Right cardiac atrium (tissue), 5 donors: ENCODE measurements at regions of chr13 and their contacts with region 1.

Region 1: DNA sequence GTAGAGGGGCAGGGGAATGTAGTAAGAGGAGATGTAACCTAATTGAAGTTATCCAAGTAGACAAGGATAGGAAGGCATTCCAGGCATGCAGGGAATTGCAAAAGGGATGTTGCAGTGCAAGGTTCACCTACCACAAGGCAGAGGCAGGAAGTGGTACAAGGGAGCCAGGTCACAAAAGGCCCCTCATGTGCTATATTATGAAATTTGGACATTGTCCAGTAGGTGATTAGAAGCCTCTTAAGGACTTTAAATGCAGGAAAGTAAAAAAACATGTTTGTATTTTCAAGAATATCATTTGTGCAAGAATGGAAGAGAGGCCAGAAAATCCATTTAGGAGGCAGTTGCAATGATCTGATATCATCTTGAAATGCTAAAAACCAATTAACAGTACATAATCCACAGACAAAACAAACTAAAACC is 111.4 kb downstream of the FRY start:
- DNase-seq: no peak
- ATAC-seq: peak in 1 of 2 donors; percentile 61
- H3K4me3 ChIP-seq: no peak overlapping the region
- H3K27ac ChIP-seq: no peak overlapping the region
- H3K4me1 ChIP-seq: peaks cover 2% of the 10 kb centered on the region
- H3K27me3 ChIP-seq: no peaks in the 10 kb centered on the region

Region 2: GRCh38 chr13:32031025-32031814 is 111.7 kb before region 1 on chr13 and contains the start of gene FRY:
- intact Hi-C with region 1: loop called in 1 of 4 experiments (anchors 10 kb)
- DNase-seq: peak; percentile 67 to 87 (median 81)
- ATAC-seq: peak; percentile 91 to 94
- H3K4me3 ChIP-seq: peak within 1 kb of the TSS; percentile 80
- H3K27ac ChIP-seq: peak within 1 kb of the TSS; percentile 57
- H3K4me1 ChIP-seq: no peaks in the 10 kb centered on the region
- H3K27me3 ChIP-seq: no peaks in the 10 kb centered on the region
- total RNA-seq, gene FRY: 101 to 139 (median 116) TPM

Region 3: DNA sequence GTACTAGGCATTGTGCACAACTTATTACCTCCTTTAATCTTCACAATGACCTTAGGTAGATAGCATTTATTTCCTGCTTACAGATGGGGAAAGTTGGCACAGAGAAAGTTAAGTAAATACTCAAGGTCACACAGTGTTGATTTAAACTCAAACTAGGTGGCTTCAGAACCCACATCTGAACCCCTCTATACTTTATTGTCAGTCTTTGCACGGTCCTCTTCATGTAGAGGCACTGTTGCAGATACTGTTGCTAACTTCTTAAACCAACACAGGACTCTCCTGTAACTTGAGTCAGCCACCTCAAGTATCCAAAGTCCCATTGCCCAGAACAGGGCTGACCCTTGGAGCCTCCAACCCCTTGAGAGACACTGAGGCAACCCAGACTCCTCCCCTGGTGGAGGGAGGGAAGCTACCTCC is 62.6 kb before region 1 on chr13:
- intact Hi-C with region 1: no loop called
- DNase-seq: no peak
- ATAC-seq: peak in 1 of 2 donors; percentile 14
- H3K4me3 ChIP-seq: no peak overlapping the region
- H3K27ac ChIP-seq: no peak overlapping the region
- H3K4me1 ChIP-seq: no peaks in the 10 kb centered on the region
- H3K27me3 ChIP-seq: no peaks in the 10 kb centered on the region